CD4-positive, alpha-beta T cell (primary cell): ENCODE measurements at regions of chr6 and their contacts with region 1.

Region 1: GRCh38 chr6:12011276-12012076 is 636 bp upstream of the HIVEP1 start:
- DNase-seq: peak; percentile 93 to 99 (median 96)
- ATAC-seq: peak; percentile 67
- H3K4me3 ChIP-seq: peak overlapping the region; percentile 85
- H3K4me3 Mint-ChIP-seq: peak overlapping the region; percentile 92
- H3K27ac ChIP-seq: no peak overlapping the region
- H3K27ac Mint-ChIP-seq: peak overlapping the region; percentile 98
- H3K4me1 ChIP-seq: peaks cover 28% of the 10 kb centered on the region
- H3K4me1 Mint-ChIP-seq: peaks cover 63% of the 10 kb centered on the region
- H3K27me3 ChIP-seq: no peaks in the 10 kb centered on the region
- H3K27me3 Mint-ChIP-seq: peaks cover 5% of the 10 kb centered on the region
- CTCF ChIP-seq: no peak

Region 2: GRCh38 chr6:11381801-11382513 is 629.5 kb before region 1 on chr6:
- CTCF ChIA-PET with region 1: no interaction called
- POLR2A ChIA-PET with region 1: interaction called, 3 read pairs
- intact Hi-C with region 1: loop called in 1 of 2 experiments (anchors 5 kb)
- DNase-seq: peak; percentile 41 to 94 (median 59)
- ATAC-seq: peak; percentile 93
- H3K4me3 ChIP-seq: peak overlapping the region; percentile 71
- H3K4me3 Mint-ChIP-seq: peak overlapping the region; percentile 85
- H3K27ac ChIP-seq: peak overlapping the region; percentile 84 to 86
- H3K27ac Mint-ChIP-seq: peak overlapping the region; percentile 93
- H3K4me1 ChIP-seq: peaks cover 48% of the 10 kb centered on the region
- H3K4me1 Mint-ChIP-seq: peaks cover 69% of the 10 kb centered on the region
- H3K27me3 ChIP-seq: no peaks in the 10 kb centered on the region
- H3K27me3 Mint-ChIP-seq: no peaks in the 10 kb centered on the region
- CTCF ChIP-seq: no peak

Region 3: GRCh38 chr6:11711003-11711983 is 300.2 kb before region 1 on chr6:
- CTCF ChIA-PET with region 1: no interaction called
- POLR2A ChIA-PET with region 1: interaction called, 89 read pairs
- intact Hi-C with region 1: loop called (anchors 5 kb)
- DNase-seq: peak in 7 of 14 experiments; percentile 26 to 56 (median 46)
- ATAC-seq: peak; percentile 43
- H3K4me3 ChIP-seq: no peak overlapping the region
- H3K4me3 Mint-ChIP-seq: peak overlapping the region; percentile 44
- H3K27ac ChIP-seq: peak overlapping the region; percentile 48 to 77
- H3K27ac Mint-ChIP-seq: peak overlapping the region; percentile 100
- H3K4me1 ChIP-seq: peaks cover 68% of the 10 kb centered on the region
- H3K4me1 Mint-ChIP-seq: peaks cover 82% of the 10 kb centered on the region
- H3K27me3 ChIP-seq: no peaks in the 10 kb centered on the region
- H3K27me3 Mint-ChIP-seq: no peaks in the 10 kb centered on the region
- CTCF ChIP-seq: no peak

Region 4: DNA sequence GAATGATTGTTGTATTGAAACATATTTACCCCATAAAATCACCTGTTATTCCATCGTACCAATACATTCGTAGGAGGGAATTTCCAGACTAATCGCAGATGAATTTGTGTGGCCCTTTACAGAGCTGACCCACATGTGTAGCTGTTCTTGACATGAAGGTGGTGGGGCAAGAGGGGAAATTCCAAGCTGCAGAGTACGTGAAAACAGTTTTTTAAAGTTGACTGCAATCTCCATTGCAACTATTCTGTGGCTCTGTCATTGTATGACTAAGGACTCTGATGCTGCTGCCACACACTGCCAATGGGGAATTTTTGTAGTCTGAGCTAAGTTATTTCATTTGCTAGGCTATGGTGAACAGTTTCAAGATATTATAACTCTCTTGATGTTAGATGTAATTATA is 186.5 kb before region 1 on chr6:
- CTCF ChIA-PET with region 1: no interaction called
- POLR2A ChIA-PET with region 1: no interaction called
- intact Hi-C with region 1: loop called in 1 of 2 experiments (anchors 5 kb)
- DNase-seq: peak in 2 of 14 experiments; percentile 57 to 67
- ATAC-seq: peak; percentile 56
- H3K4me3 ChIP-seq: no peak overlapping the region
- H3K4me3 Mint-ChIP-seq: no peak overlapping the region
- H3K27ac ChIP-seq: no peak overlapping the region
- H3K27ac Mint-ChIP-seq: no peak overlapping the region
- H3K4me1 ChIP-seq: no peaks in the 10 kb centered on the region
- H3K4me1 Mint-ChIP-seq: peaks cover 8% of the 10 kb centered on the region
- H3K27me3 ChIP-seq: no peaks in the 10 kb centered on the region
- H3K27me3 Mint-ChIP-seq: no peaks in the 10 kb centered on the region
- CTCF ChIP-seq: no peak

Region 5: DNA sequence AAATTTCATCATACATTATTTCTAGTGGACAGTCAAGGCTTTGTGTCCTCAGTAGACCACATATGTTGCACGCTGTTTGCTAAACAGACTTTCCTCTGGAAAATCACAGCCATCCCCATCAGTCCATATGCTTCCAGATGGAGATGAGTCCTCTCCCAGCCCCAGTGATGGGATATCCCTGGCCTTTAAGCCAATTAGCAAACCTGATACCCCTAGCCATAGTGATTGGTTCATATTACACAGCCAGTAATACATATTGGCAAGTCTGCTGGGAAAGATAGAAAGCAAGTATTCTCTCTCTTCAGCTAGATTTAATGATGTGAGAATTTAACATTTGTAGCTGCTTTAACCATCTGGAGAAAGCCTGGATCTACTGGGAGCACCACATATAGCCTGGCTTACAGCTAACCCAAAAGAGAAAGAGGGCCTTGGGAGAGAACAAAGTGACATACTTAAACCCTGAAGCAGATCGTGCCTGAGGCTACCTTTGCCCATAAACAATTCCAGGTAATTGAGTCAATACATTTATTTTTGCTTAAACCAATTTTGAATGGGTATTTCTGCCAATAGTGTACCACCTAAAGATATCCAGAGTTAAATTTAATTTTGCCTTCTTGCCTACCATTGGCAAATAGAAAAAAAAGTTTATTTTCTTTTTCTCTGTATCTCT is 102.9 kb before region 1 on chr6:
- CTCF ChIA-PET with region 1: no interaction called
- POLR2A ChIA-PET with region 1: no interaction called
- intact Hi-C with region 1: no loop called
- DNase-seq: no peak
- ATAC-seq: no peak
- H3K4me3 ChIP-seq: no peak overlapping the region
- H3K4me3 Mint-ChIP-seq: no peak overlapping the region
- H3K27ac ChIP-seq: no peak overlapping the region
- H3K27ac Mint-ChIP-seq: no peak overlapping the region
- H3K4me1 ChIP-seq: no peaks in the 10 kb centered on the region
- H3K4me1 Mint-ChIP-seq: no peaks in the 10 kb centered on the region
- H3K27me3 ChIP-seq: no peaks in the 10 kb centered on the region
- H3K27me3 Mint-ChIP-seq: no peaks in the 10 kb centered on the region
- CTCF ChIP-seq: no peak

Region 6: GRCh38 chr6:11921017-11921438 is 90.4 kb before region 1 on chr6:
- CTCF ChIA-PET with region 1: no interaction called
- POLR2A ChIA-PET with region 1: no interaction called
- intact Hi-C with region 1: no loop called
- DNase-seq: no peak
- ATAC-seq: no peak
- H3K4me3 ChIP-seq: no peak overlapping the region
- H3K4me3 Mint-ChIP-seq: no peak overlapping the region
- H3K27ac ChIP-seq: no peak overlapping the region
- H3K27ac Mint-ChIP-seq: no peak overlapping the region
- H3K4me1 ChIP-seq: no peaks in the 10 kb centered on the region
- H3K4me1 Mint-ChIP-seq: no peaks in the 10 kb centered on the region
- H3K27me3 ChIP-seq: no peaks in the 10 kb centered on the region
- H3K27me3 Mint-ChIP-seq: no peaks in the 10 kb centered on the region
- CTCF ChIP-seq: no peak

Region 7: GRCh38 chr6:12051861-12052368 is 40.4 kb after region 1 on chr6:
- CTCF ChIA-PET with region 1: no interaction called
- POLR2A ChIA-PET with region 1: interaction called, 7 read pairs
- intact Hi-C with region 1: loop called (anchors 2 to 5 kb)
- DNase-seq: peak in 10 of 14 experiments; percentile 17 to 90 (median 45)
- ATAC-seq: peak; percentile 98
- H3K4me3 ChIP-seq: no peak overlapping the region
- H3K4me3 Mint-ChIP-seq: peak overlapping the region; percentile 26
- H3K27ac ChIP-seq: peak overlapping the region in 1 of 2 donors; percentile 3
- H3K27ac Mint-ChIP-seq: peak overlapping the region; percentile 84
- H3K4me1 ChIP-seq: peaks cover 10% of the 10 kb centered on the region
- H3K4me1 Mint-ChIP-seq: peaks cover 77% of the 10 kb centered on the region
- H3K27me3 ChIP-seq: no peaks in the 10 kb centered on the region
- H3K27me3 Mint-ChIP-seq: no peaks in the 10 kb centered on the region
- CTCF ChIP-seq: no peak

Region 8: GRCh38 chr6:13328076-13328874 is 1316.8 kb after region 1 on chr6 and contains the start of gene TBC1D7:
- CTCF ChIA-PET with region 1: no interaction called
- POLR2A ChIA-PET with region 1: no interaction called
- intact Hi-C with region 1: loop called in 1 of 2 experiments (anchors 5 kb)
- DNase-seq: peak; percentile 85 to 97 (median 92)
- ATAC-seq: peak; percentile 87
- H3K4me3 ChIP-seq: peak within 1 kb of the TSS; percentile 91
- H3K4me3 Mint-ChIP-seq: peak within 1 kb of the TSS; percentile 97
- H3K27ac ChIP-seq: peak within 1 kb of the TSS; percentile 88 to 95
- H3K27ac Mint-ChIP-seq: peak within 1 kb of the TSS; percentile 99
- H3K4me1 ChIP-seq: peaks cover 13% of the 10 kb centered on the region
- H3K4me1 Mint-ChIP-seq: peaks cover 38% of the 10 kb centered on the region
- H3K27me3 ChIP-seq: no peaks in the 10 kb centered on the region
- H3K27me3 Mint-ChIP-seq: no peaks in the 10 kb centered on the region
- CTCF ChIP-seq: no peak
- total RNA-seq, gene TBC1D7: 10.2 to 12.3 TPM